Transverse colon (tissue), 4 donors: ENCODE measurements at regions of chr20 and their contacts with region 1.

Region 1: DNA sequence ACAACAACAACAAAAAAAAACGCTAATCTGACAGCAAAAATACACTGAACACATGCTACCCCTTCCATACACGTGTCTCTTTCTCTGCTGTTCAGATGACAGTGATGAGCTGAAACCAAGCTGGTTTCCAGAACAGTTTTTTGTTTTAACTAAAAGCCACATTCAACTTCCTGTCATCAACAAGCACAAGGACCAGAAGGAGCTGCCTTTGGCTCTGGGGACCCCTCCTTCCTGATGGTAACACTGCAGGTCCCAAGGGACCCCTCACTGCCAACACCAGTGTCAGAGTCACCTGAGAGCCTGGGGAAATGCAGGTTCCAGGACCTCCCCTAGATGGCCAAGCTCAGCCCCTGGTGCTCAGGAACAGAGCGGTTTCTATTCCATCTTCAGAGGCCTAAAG is 6.0 kb downstream of the CST7 start:
- DNase-seq: no peak
- H3K4me3 ChIP-seq: no peak overlapping the region
- H3K27ac ChIP-seq: no peak overlapping the region
- H3K4me1 ChIP-seq: peaks cover 0 to 2% (median 0%) of the 10 kb centered on the region in 4 donors
- H3K27me3 ChIP-seq: peaks cover 4% of the 10 kb centered on the region
- CTCF ChIP-seq: no peak
- EP300 ChIP-seq: no peak
- POLR2A ChIP-seq: no peak

Region 2: GRCh38 chr20:23245553-23246181 is 1709.4 kb before region 1 on chr20:
- in situ Hi-C with region 1: no loop called
- intact Hi-C with region 1: loop called (anchors 10 kb)
- DNase-seq: peak; percentile 48
- H3K4me3 ChIP-seq: no peak overlapping the region
- H3K27ac ChIP-seq: peak overlapping the region in 1 of 4 donors; percentile 43
- H3K4me1 ChIP-seq: no peaks in the 10 kb centered on the region
- H3K27me3 ChIP-seq: no peaks in the 10 kb centered on the region
- CTCF ChIP-seq: peak; percentile 20 to 40 (median 25)
- EP300 ChIP-seq: no peak
- POLR2A ChIP-seq: no peak